B cell (primary cell): ENCODE measurements at regions of chr13 and their contacts with region 1.

Region 1: DNA sequence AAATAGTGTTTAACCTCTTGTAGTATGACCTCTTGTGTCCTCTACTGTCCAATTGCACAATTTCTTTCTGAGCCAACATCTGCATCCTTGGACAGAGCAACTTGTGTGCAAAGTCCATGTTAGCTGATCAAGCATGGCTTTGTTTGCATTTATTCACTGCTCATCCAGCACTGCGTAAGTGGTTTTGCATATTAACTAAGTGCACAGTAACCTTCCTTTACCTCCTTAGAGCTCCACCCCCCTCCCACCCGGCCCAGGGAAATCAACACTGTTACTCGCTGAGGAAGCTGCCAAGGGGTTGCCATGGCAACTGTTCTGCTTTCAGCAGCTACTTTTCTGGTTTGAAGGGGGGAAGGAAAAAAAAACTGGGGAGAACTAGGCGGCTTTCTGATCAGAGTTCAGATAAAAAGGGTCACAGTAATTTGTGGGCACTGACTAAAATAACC is 153.5 kb upstream of the KLF12 start:
- DNase-seq: peak; percentile 96
- ATAC-seq: peak; percentile 53
- H3K4me3 ChIP-seq: peak overlapping the region; percentile 43 to 77 (median 58)
- H3K4me3 Mint-ChIP-seq: peak overlapping the region; percentile 88
- H3K27ac ChIP-seq: peak overlapping the region; percentile 92 to 93
- H3K27ac Mint-ChIP-seq: peak overlapping the region; percentile 92
- H3K4me1 ChIP-seq: peaks cover 39 to 44% of the 10 kb centered on the region in 2 donors
- H3K4me1 Mint-ChIP-seq: peaks cover 51% of the 10 kb centered on the region
- H3K27me3 ChIP-seq: no peaks in the 10 kb centered on the region
- H3K27me3 Mint-ChIP-seq: no peaks in the 10 kb centered on the region
- CTCF ChIP-seq: no peak

Region 2: GRCh38 chr13:73058736-73059459 is 1228.8 kb before region 1 on chr13 and contains the start of gene KLF5:
- CTCF ChIA-PET with region 1: interaction called, 4 read pairs
- POLR2A ChIA-PET with region 1: no interaction called
- intact Hi-C with region 1: loop called (anchors 5 kb)
- DNase-seq: peak; percentile 92
- ATAC-seq: peak; percentile 97
- H3K4me3 ChIP-seq: peak within 1 kb of the TSS; percentile 50 to 74 (median 59)
- H3K4me3 Mint-ChIP-seq: peak within 1 kb of the TSS; percentile 96
- H3K27ac ChIP-seq: no peak within 1 kb of the TSS
- H3K27ac Mint-ChIP-seq: peak within 1 kb of the TSS; percentile 87
- H3K4me1 ChIP-seq: peaks cover 15 to 18% of the 10 kb centered on the region in 2 donors
- H3K4me1 Mint-ChIP-seq: peaks cover 24% of the 10 kb centered on the region
- H3K27me3 ChIP-seq: peaks cover 3 to 35% (median 30%) of the 10 kb centered on the region in 4 experiments
- H3K27me3 Mint-ChIP-seq: peaks cover 46% of the 10 kb centered on the region
- CTCF ChIP-seq: no peak
- total RNA-seq, gene KLF5: 0.87 and 0.94 TPM in 2 replicates

Region 3: GRCh38 chr13:73835138-73835721 is 452.5 kb before region 1 on chr13:
- CTCF ChIA-PET with region 1: interaction called, 160 read pairs
- POLR2A ChIA-PET with region 1: interaction called, 5 read pairs
- intact Hi-C with region 1: loop called (anchors 1 kb)
- DNase-seq: peak; percentile 64
- ATAC-seq: peak; percentile 57
- H3K4me3 ChIP-seq: no peak overlapping the region
- H3K4me3 Mint-ChIP-seq: no peak overlapping the region
- H3K27ac ChIP-seq: no peak overlapping the region
- H3K27ac Mint-ChIP-seq: no peak overlapping the region
- H3K4me1 ChIP-seq: peaks cover 2 to 5% of the 10 kb centered on the region in 2 donors
- H3K4me1 Mint-ChIP-seq: peaks cover 23% of the 10 kb centered on the region
- H3K27me3 ChIP-seq: no peaks in the 10 kb centered on the region
- H3K27me3 Mint-ChIP-seq: no peaks in the 10 kb centered on the region
- CTCF ChIP-seq: peak; percentile 91

Region 4: DNA sequence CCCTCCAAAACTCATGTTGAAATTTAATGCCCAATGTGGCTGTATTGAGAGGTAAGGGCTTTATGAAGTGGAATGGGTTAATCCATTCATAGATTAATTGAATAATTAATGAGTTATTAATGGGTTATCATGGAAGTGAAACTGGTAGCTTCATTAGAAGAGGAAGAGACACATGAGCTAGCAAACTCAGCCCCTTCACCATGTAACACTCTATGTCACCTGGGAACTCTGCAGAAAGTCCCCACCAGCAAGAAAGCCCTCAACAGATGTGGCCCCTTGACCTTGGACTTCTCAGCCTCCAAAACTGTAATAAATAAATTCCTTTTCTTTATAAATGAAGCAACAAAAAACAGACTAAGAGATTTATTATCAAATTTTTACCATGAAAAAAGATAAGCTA is 377.0 kb before region 1 on chr13:
- CTCF ChIA-PET with region 1: no interaction called
- POLR2A ChIA-PET with region 1: no interaction called
- intact Hi-C with region 1: no loop called
- DNase-seq: no peak
- ATAC-seq: no peak
- H3K4me3 ChIP-seq: no peak overlapping the region
- H3K4me3 Mint-ChIP-seq: no peak overlapping the region
- H3K27ac ChIP-seq: no peak overlapping the region
- H3K27ac Mint-ChIP-seq: no peak overlapping the region
- H3K4me1 ChIP-seq: peaks cover 11 to 13% of the 10 kb centered on the region in 2 donors
- H3K4me1 Mint-ChIP-seq: peaks cover 38% of the 10 kb centered on the region
- H3K27me3 ChIP-seq: no peaks in the 10 kb centered on the region
- H3K27me3 Mint-ChIP-seq: no peaks in the 10 kb centered on the region
- CTCF ChIP-seq: no peak

Region 5: GRCh38 chr13:73943137-73943964 is 344.4 kb before region 1 on chr13:
- CTCF ChIA-PET with region 1: interaction called, 40 read pairs
- POLR2A ChIA-PET with region 1: no interaction called
- intact Hi-C with region 1: loop called (anchors 2 kb)
- DNase-seq: peak; percentile 20
- ATAC-seq: peak; percentile 81
- H3K4me3 ChIP-seq: no peak overlapping the region
- H3K4me3 Mint-ChIP-seq: peak overlapping the region; percentile 6
- H3K27ac ChIP-seq: no peak overlapping the region
- H3K27ac Mint-ChIP-seq: peak overlapping the region; percentile 8
- H3K4me1 ChIP-seq: peaks cover 0 to 3% of the 10 kb centered on the region in 2 donors
- H3K4me1 Mint-ChIP-seq: peaks cover 53% of the 10 kb centered on the region
- H3K27me3 ChIP-seq: no peaks in the 10 kb centered on the region
- H3K27me3 Mint-ChIP-seq: no peaks in the 10 kb centered on the region
- CTCF ChIP-seq: no peak

Region 6: GRCh38 chr13:74062933-74063332 is 224.8 kb before region 1 on chr13:
- CTCF ChIA-PET with region 1: interaction called, 10 read pairs
- POLR2A ChIA-PET with region 1: interaction called, 5 read pairs
- intact Hi-C with region 1: no loop called
- DNase-seq: peak; percentile 34
- ATAC-seq: peak; percentile 50
- H3K4me3 ChIP-seq: peak overlapping the region in 3 of 5 experiments; percentile 21 to 49 (median 22)
- H3K4me3 Mint-ChIP-seq: peak overlapping the region; percentile 83
- H3K27ac ChIP-seq: peak overlapping the region; percentile 63 to 81
- H3K27ac Mint-ChIP-seq: peak overlapping the region; percentile 88
- H3K4me1 ChIP-seq: peaks cover 49 to 59% of the 10 kb centered on the region in 2 donors
- H3K4me1 Mint-ChIP-seq: peaks cover 81% of the 10 kb centered on the region
- H3K27me3 ChIP-seq: no peaks in the 10 kb centered on the region
- H3K27me3 Mint-ChIP-seq: no peaks in the 10 kb centered on the region
- CTCF ChIP-seq: no peak

Region 7: GRCh38 chr13:74158571-74159352 is 129.0 kb before region 1 on chr13:
- CTCF ChIA-PET with region 1: no interaction called
- POLR2A ChIA-PET with region 1: no interaction called
- intact Hi-C with region 1: no loop called
- DNase-seq: no peak
- ATAC-seq: no peak
- H3K4me3 ChIP-seq: no peak overlapping the region
- H3K4me3 Mint-ChIP-seq: no peak overlapping the region
- H3K27ac ChIP-seq: no peak overlapping the region
- H3K27ac Mint-ChIP-seq: no peak overlapping the region
- H3K4me1 ChIP-seq: no peaks in the 10 kb centered on the region
- H3K4me1 Mint-ChIP-seq: no peaks in the 10 kb centered on the region
- H3K27me3 ChIP-seq: no peaks in the 10 kb centered on the region
- H3K27me3 Mint-ChIP-seq: peaks cover 3% of the 10 kb centered on the region
- CTCF ChIP-seq: no peak

Region 8: GRCh38 chr13:74423434-74423833 is 135.7 kb after region 1 on chr13:
- CTCF ChIA-PET with region 1: no interaction called
- POLR2A ChIA-PET with region 1: no interaction called
- intact Hi-C with region 1: no loop called
- DNase-seq: no peak
- ATAC-seq: no peak
- H3K4me3 ChIP-seq: no peak overlapping the region
- H3K4me3 Mint-ChIP-seq: no peak overlapping the region
- H3K27ac ChIP-seq: no peak overlapping the region
- H3K27ac Mint-ChIP-seq: no peak overlapping the region
- H3K4me1 ChIP-seq: no peaks in the 10 kb centered on the region
- H3K4me1 Mint-ChIP-seq: no peaks in the 10 kb centered on the region
- H3K27me3 ChIP-seq: no peaks in the 10 kb centered on the region
- H3K27me3 Mint-ChIP-seq: peaks cover 7% of the 10 kb centered on the region
- CTCF ChIP-seq: no peak

Region 9: GRCh38 chr13:75537401-75538365 is 1249.9 kb after region 1 on chr13 and contains the start of gene COMMD6:
- CTCF ChIA-PET with region 1: no interaction called
- POLR2A ChIA-PET with region 1: no interaction called
- intact Hi-C with region 1: loop called (anchors 5 kb)
- DNase-seq: peak; percentile 86
- ATAC-seq: peak; percentile 94
- H3K4me3 ChIP-seq: peak within 1 kb of the TSS; percentile 70 to 92 (median 86)
- H3K4me3 Mint-ChIP-seq: peak within 1 kb of the TSS; percentile 100
- H3K27ac ChIP-seq: peak within 1 kb of the TSS; percentile 56 to 75
- H3K27ac Mint-ChIP-seq: peak within 1 kb of the TSS; percentile 97
- H3K4me1 ChIP-seq: peaks cover 12 to 22% of the 10 kb centered on the region in 2 donors
- H3K4me1 Mint-ChIP-seq: peaks cover 43% of the 10 kb centered on the region
- H3K27me3 ChIP-seq: no peaks in the 10 kb centered on the region
- H3K27me3 Mint-ChIP-seq: no peaks in the 10 kb centered on the region
- CTCF ChIP-seq: peak; percentile 46
- total RNA-seq, gene COMMD6: 152 and 153 TPM in 2 replicates